ENCODE measurements at regions of chr13 and their contacts with region 1.

Region 1: GRCh38 chr13:44577236-44578066 is 1.3 kb upstream of the TSC22D1 start:
- DNase-seq: peak; percentile 88
- H3K4me3 Mint-ChIP-seq: peak overlapping the region; percentile 92
- H3K27ac Mint-ChIP-seq: peak overlapping the region; percentile 86
- H3K4me1 Mint-ChIP-seq: peaks cover 36% of the 10 kb centered on the region
- H3K27me3 Mint-ChIP-seq: peaks cover 41% of the 10 kb centered on the region

Region 2: DNA sequence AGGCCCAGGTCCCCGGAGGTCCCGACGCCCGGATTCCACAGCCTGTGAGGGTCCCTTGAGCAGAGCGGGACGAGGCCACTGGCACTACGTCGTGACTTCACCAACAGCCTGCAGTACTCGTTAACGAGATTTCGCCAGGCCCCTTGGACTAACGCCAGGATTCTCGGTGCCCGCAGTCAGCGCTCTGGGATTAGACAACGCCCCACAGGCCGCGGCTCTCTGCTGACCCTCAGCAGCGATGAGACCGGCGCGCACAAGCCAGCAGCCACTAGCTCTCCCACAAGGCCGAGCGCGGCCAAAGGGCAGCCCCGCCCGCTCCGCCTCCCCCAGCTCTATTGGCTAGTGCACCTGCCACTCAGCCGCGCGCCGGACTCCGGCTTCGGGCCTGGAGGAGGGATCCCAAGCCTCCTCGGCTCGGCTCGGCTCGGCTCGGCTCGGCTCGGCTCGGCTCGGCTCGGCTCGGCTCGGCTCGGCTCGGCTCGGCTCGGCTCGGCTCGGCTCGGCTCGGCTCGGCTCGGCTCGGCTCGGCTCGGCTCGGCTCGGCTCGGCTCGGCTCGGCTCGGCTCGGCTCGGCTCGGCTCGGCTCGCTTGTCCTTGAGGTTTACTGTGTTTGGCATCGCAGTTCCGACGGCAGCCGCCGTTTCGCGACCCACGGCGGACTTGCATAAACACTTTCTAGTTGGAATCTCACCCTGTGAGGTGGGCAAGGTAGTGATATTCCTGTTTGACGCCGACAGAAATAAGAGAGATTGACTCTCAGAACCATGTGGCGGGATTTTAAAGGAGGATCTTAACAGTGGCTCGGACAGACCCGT is 435.5 kb before region 1 on chr13:
- intact Hi-C with region 1: loop called (anchors 5 kb)
- DNase-seq: peak; percentile 94
- H3K4me3 Mint-ChIP-seq: peak overlapping the region; percentile 85
- H3K27ac Mint-ChIP-seq: peak overlapping the region; percentile 82
- H3K4me1 Mint-ChIP-seq: peaks cover 26% of the 10 kb centered on the region
- H3K27me3 Mint-ChIP-seq: peaks cover 41% of the 10 kb centered on the region

Region 3: GRCh38 chr13:44435142-44435982 is 142.1 kb before region 1 on chr13:
- intact Hi-C with region 1: loop called (anchors 2 kb)
- DNase-seq: peak; percentile 70
- H3K4me3 Mint-ChIP-seq: peak overlapping the region; percentile 83
- H3K27ac Mint-ChIP-seq: peak overlapping the region; percentile 72
- H3K4me1 Mint-ChIP-seq: peaks cover 17% of the 10 kb centered on the region
- H3K27me3 Mint-ChIP-seq: peaks cover 47% of the 10 kb centered on the region

Region 4: GRCh38 chr13:44648392-44649103 is 71.1 kb after region 1 on chr13:
- intact Hi-C with region 1: loop called (anchors 1 kb)
- DNase-seq: no peak
- H3K4me3 Mint-ChIP-seq: no peak overlapping the region
- H3K27ac Mint-ChIP-seq: peak overlapping the region; percentile 37
- H3K4me1 Mint-ChIP-seq: peaks cover 21% of the 10 kb centered on the region
- H3K27me3 Mint-ChIP-seq: peaks cover 9% of the 10 kb centered on the region

Region 5: GRCh38 chr13:44815623-44816022 is 238.2 kb after region 1 on chr13:
- intact Hi-C with region 1: loop called (anchors 1 kb)
- DNase-seq: peak; percentile 10
- H3K4me3 Mint-ChIP-seq: no peak overlapping the region
- H3K27ac Mint-ChIP-seq: peak overlapping the region; percentile 8
- H3K4me1 Mint-ChIP-seq: peaks cover 29% of the 10 kb centered on the region
- H3K27me3 Mint-ChIP-seq: peaks cover 12% of the 10 kb centered on the region

Region 6: DNA sequence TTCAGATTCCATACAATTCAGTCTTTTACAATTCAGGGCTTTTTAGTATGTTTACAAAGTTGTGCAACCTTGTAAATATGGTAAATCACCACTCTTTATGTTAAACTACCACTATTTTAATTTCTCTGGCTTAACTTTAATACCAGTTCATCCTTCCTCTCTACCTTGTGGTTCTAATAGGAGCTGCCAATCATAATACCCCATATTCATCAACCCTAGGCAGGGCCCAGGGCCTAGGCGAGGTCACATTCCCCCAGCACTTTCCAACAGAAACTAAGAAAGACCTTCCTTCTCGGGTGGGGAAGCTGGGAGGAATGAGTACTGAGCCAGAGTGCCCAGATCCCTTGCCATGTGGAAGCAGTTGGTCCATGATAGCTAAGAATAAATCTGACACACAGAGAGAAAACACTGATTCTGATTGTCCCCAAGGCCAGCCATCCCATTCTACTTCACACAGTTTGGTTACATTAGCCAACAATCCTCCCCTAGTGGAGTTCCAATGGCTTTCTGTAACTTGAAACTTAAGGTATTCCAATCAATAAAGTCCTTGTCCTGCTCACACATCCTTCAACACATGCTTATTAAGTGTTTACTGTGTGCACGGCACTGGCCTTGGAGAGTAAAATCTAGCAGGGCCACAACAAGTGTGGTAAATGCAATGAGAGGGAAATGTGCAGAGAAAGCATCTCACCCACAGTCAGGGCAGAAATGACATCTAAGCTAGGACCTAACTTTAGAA is 335.0 kb after region 1 on chr13:
- intact Hi-C with region 1: no loop called
- DNase-seq: no peak
- H3K4me3 Mint-ChIP-seq: no peak overlapping the region
- H3K27ac Mint-ChIP-seq: no peak overlapping the region
- H3K4me1 Mint-ChIP-seq: no peaks in the 10 kb centered on the region
- H3K27me3 Mint-ChIP-seq: no peaks in the 10 kb centered on the region

Region 7: DNA sequence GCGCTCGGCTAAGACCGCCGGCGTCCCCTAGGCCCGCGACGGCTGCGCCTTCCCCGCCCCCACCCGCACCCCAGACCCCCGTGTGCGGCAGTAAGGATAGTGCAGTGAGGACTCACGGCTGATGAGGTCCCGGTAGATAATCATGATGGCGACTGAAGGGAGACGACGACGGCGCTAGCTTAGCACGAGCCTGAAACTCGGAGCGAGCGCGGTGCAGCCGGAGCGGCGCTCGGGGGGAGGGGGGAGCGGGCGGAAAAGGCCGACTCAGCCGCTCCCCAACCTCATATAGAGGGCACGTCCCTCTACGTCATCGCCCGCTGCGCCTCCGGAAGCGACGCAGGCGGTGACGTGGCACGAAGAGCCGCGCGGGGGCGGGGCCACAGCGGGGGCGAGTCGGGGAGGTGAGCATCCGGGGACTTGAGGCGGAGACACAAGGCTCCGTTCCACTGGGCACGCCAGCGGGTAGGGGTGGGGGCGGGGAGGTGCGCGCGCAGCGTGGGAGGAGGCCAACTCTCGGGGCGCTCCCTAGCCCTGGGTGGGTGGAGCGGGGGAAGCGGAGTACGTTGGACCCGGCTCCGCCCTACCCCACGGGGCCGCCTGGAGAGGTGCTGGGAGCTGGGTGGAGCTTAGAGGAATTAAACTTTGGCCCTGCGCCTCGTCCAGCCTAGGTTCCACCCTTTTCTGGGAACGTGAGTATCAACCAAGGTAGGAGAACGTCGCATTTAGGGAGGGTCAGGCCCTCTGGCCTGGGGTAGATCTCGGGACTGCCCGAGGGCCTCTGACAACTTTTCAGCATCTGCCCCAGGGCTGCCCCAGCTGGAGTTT is 763.7 kb after region 1 on chr13 and contains the start of gene TPT1:
- intact Hi-C with region 1: loop called (anchors 2 kb)
- DNase-seq: peak; percentile 99
- H3K4me3 Mint-ChIP-seq: peak within 1 kb of the TSS; percentile 99
- H3K27ac Mint-ChIP-seq: peak within 1 kb of the TSS; percentile 100
- H3K4me1 Mint-ChIP-seq: peaks cover 56% of the 10 kb centered on the region
- H3K27me3 Mint-ChIP-seq: no peaks in the 10 kb centered on the region
- total RNA-seq, gene TPT1: 2,353 and 2,360 TPM in 2 replicates

Region 8: GRCh38 chr13:46176756-46177155 is 1599.3 kb after region 1 on chr13:
- intact Hi-C with region 1: loop called (anchors 10 kb)
- DNase-seq: no peak
- H3K4me3 Mint-ChIP-seq: peak overlapping the region; percentile 97
- H3K27ac Mint-ChIP-seq: peak overlapping the region; percentile 86
- H3K4me1 Mint-ChIP-seq: peaks cover 73% of the 10 kb centered on the region
- H3K27me3 Mint-ChIP-seq: no peaks in the 10 kb centered on the region

Measured in activated T-helper 1 cell treated with anti-CD3 and anti-CD28 coated beads, Interleukin-12 subunit alpha, Interleukin-12 subunit beta, Interleukin-2, Interleukin-4 antibody, amounts not matched to agents 30 ng/mL and 10 ng/mL and 1 ng/mL, durations not matched to agents 14 hours and 24 hours and 36 hours (primary cell).